HepG2 (cell line): ENCODE measurements at regions of chr11 and their contacts with region 1.

Region 1: GRCh38 chr11:86978756-86979608 is 23.8 kb upstream of the FZD4 start:
- DNase-seq: no peak
- ATAC-seq: peak; percentile 77
- H3K4me3 ChIP-seq: no peak overlapping the region
- H3K27ac ChIP-seq: peak overlapping the region; percentile 28
- H3K4me1 ChIP-seq: peaks cover 59% of the 10 kb centered on the region
- H3K27me3 ChIP-seq: no peaks in the 10 kb centered on the region
- CTCF ChIP-seq: peak; percentile 58
- EP300 ChIP-seq: no peak
- POLR2A ChIP-seq: no peak
- RAD21 ChIP-seq: peak; percentile 37; the same call in 1 of the 2 replicates

Region 2: GRCh38 chr11:86955361-86956120 is 23.4 kb before region 1 on chr11 and contains the start of gene FZD4:
- CTCF ChIA-PET with region 1: no interaction called
- POLR2A ChIA-PET with region 1: interaction called, 16 read pairs
- in situ Hi-C with region 1: no loop called
- intact Hi-C with region 1: loop called (anchors 2 kb)
- DNase-seq: peak; percentile 88
- ATAC-seq: peak; percentile 92
- H3K4me3 ChIP-seq: peak within 1 kb of the TSS; percentile 79 to 87 (median 82)
- H3K27ac ChIP-seq: peak within 1 kb of the TSS; percentile 96
- H3K4me1 ChIP-seq: peaks cover 50% of the 10 kb centered on the region
- H3K27me3 ChIP-seq: no peaks in the 10 kb centered on the region; a peak in 1 of 5 replicates
- CTCF ChIP-seq: peak; percentile 71
- EP300 ChIP-seq: peak in 1 of 2 experiments; percentile 23; a peak in 1 of 4 replicates
- POLR2A ChIP-seq: peak; percentile 67 to 68
- RAD21 ChIP-seq: peak; percentile 78; the same call in 1 of the 2 replicates
- total RNA-seq, gene FZD4: 34.7 and 46.5 TPM in 2 replicates

Region 3: DNA sequence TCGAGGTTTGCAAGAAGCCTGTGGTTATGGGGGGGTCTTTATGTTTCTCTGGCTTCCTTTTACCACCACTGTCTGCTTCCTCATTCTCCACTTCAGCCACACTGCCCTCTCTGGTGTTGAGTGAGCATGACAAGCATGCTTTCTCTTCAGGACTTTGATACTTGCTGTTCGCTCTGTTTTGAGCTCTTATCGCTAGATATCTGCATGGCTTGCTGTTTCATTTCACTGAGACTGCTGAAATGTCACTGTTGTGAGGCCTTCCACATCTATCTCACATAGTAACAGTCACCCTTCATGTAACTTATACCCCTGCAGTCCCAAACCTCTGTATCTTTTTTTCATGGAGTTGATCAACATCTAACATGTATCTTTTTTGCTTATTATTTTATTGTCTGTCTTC is 118.6 kb after region 1 on chr11:
- CTCF ChIA-PET with region 1: no interaction called
- POLR2A ChIA-PET with region 1: no interaction called
- in situ Hi-C with region 1: no loop called
- intact Hi-C with region 1: loop called (anchors 2 kb)
- DNase-seq: peak; percentile 87
- ATAC-seq: peak; percentile 99
- H3K4me3 ChIP-seq: no peak overlapping the region
- H3K27ac ChIP-seq: peak overlapping the region; percentile 52
- H3K4me1 ChIP-seq: peaks cover 13% of the 10 kb centered on the region
- H3K27me3 ChIP-seq: no peaks in the 10 kb centered on the region; a peak in 1 of 5 replicates
- CTCF ChIP-seq: peak; percentile 85
- EP300 ChIP-seq: no peak
- POLR2A ChIP-seq: no peak
- RAD21 ChIP-seq: 0 out of 2 replicates have a peak, but pooled peaks have one; percentile 28

Region 4: GRCh38 chr11:87193756-87194470 is 214.9 kb after region 1 on chr11:
- CTCF ChIA-PET with region 1: no interaction called
- POLR2A ChIA-PET with region 1: no interaction called
- in situ Hi-C with region 1: no loop called
- intact Hi-C with region 1: no loop called
- DNase-seq: no peak
- ATAC-seq: no peak
- H3K4me3 ChIP-seq: no peak overlapping the region
- H3K27ac ChIP-seq: no peak overlapping the region
- H3K4me1 ChIP-seq: no peaks in the 10 kb centered on the region
- H3K27me3 ChIP-seq: no peaks in the 10 kb centered on the region
- CTCF ChIP-seq: no peak
- EP300 ChIP-seq: no peak
- POLR2A ChIP-seq: no peak
- RAD21 ChIP-seq: no peak